ENCODE measurements at regions of chr3 and their contacts with region 1.

Region 1: DNA sequence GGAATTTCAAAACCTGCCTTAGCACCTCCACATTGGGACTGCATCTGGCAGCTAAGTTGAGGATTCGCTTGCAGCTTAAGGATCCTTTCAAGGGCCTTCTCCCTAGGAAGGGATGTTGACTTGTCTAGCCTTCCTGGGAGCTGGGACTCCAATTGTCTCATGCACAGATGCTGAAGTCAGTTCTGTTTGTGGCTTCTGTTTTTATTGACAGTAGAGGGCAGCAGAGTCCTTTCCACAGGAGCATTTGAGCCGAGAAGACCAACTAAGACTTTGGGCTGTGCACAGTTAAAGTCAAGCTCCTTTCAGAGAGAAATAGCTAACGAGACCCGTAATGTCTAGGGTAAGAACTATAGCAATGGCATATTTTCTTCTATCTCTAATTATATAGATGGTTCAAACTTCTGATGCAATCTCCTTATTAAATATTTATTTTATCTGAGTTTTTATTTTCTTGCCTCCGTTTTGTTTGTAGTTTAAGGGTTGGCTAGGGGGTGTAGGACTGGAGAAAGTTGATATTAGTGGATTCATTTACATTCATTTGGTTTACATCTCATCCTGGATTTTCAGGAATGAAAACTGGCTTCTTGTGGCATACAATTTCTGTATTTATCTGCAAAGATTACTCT is 59.7 kb upstream of the KBTBD8 start:
- DNase-seq: peak; percentile 44
- ATAC-seq: peak; percentile 91
- H3K4me3 ChIP-seq: no peak overlapping the region
- H3K27ac ChIP-seq: no peak overlapping the region
- H3K4me1 ChIP-seq: no peaks in the 10 kb centered on the region
- H3K27me3 ChIP-seq: peaks cover 37% of the 10 kb centered on the region
- CTCF ChIP-seq: peak; percentile 44 to 76 (median 69); a peak in 5 of 6 replicates
- POLR2A ChIP-seq: no peak
- RAD21 ChIP-seq: peak; percentile 71

Region 2: DNA sequence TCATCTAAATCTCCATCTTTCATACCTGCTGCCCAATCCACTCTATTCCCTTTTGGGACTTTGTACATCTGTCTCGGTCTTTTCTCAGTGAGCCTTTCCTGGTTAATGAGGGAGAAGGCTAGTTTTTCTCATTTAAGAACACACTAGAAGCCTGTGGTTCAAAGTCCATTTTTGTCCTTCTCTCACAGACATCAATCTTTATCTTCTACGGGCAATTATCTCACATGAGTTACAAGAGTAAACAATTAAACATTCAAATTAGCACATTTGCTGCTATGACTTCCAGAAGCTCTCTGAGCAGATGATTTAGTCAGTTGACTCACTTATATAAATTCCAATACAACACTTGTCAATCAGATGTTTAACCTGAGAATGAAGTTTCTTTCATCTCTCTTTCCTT is 10.4 kb after region 1 on chr3:
- CTCF ChIA-PET with region 1: no interaction called
- POLR2A ChIA-PET with region 1: no interaction called
- RAD21 ChIA-PET with region 1: no interaction called
- intact Hi-C with region 1: no loop called
- DNase-seq: no peak
- ATAC-seq: no peak
- H3K4me3 ChIP-seq: no peak overlapping the region
- H3K27ac ChIP-seq: no peak overlapping the region
- H3K4me1 ChIP-seq: no peaks in the 10 kb centered on the region
- H3K27me3 ChIP-seq: peaks cover 78% of the 10 kb centered on the region
- CTCF ChIP-seq: no peak
- POLR2A ChIP-seq: no peak
- RAD21 ChIP-seq: no peak

Region 3: GRCh38 chr3:66989860-66990665 is 51.6 kb after region 1 on chr3:
- CTCF ChIA-PET with region 1: interaction called, 13 read pairs
- POLR2A ChIA-PET with region 1: no interaction called
- RAD21 ChIA-PET with region 1: no interaction called
- intact Hi-C with region 1: no loop called
- DNase-seq: peak; percentile 29
- ATAC-seq: peak; percentile 80
- H3K4me3 ChIP-seq: no peak overlapping the region
- H3K27ac ChIP-seq: no peak overlapping the region
- H3K4me1 ChIP-seq: peaks cover 0 to 7% of the 10 kb centered on the region in 2 experiments; a peak in 2 of 4 replicates
- H3K27me3 ChIP-seq: 0 out of 2 replicates have a peak, but pooled peaks cover under 1% of the 10 kb centered on the region
- CTCF ChIP-seq: peak; percentile 14 to 59 (median 56); a peak in 5 of 6 replicates
- POLR2A ChIP-seq: no peak
- RAD21 ChIP-seq: peak; percentile 23; the same call in 1 of the 2 replicates

Region 4: GRCh38 chr3:67790043-67790442 is 851.6 kb after region 1 on chr3:
- CTCF ChIA-PET with region 1: no interaction called
- POLR2A ChIA-PET with region 1: no interaction called
- RAD21 ChIA-PET with region 1: no interaction called
- intact Hi-C with region 1: loop called (anchors 5 kb)
- DNase-seq: peak; percentile 23
- ATAC-seq: peak; percentile 94
- H3K4me3 ChIP-seq: no peak overlapping the region
- H3K27ac ChIP-seq: no peak overlapping the region
- H3K4me1 ChIP-seq: no peaks in the 10 kb centered on the region
- H3K27me3 ChIP-seq: no peaks in the 10 kb centered on the region
- CTCF ChIP-seq: peak; percentile 46 to 74 (median 69); a peak in 5 of 6 replicates
- POLR2A ChIP-seq: no peak
- RAD21 ChIP-seq: peak; percentile 65

Region 5: DNA sequence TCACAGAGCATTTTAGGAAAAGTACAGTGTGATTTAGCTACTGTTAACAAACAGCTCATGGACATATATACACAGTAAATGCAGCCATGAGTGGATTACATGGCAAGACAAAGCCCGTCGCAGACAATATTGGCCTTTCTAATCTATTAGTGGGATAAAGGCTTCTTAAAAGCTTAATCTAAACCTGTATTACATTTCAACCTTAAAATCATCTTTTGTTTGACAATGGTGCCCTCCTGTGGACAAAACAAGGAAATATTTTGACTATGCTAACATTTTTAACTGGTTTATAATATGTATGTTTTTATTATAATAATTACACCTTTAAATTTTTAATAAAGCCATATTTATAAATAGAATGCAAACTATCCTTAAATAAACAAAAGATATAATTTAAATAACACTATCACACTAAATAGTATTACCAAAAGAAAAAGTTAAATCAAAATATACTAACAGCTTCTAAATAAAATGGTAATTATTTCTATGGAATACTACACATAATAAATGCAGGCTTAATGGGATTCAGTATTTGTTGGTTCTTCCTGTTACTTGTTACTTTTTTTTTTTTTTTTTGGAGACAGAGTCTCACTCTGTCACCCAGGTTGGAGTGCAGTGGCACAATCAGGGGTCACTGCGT is 1955.3 kb after region 1 on chr3:
- CTCF ChIA-PET with region 1: interaction called, 3 read pairs
- POLR2A ChIA-PET with region 1: no interaction called
- RAD21 ChIA-PET with region 1: no interaction called
- intact Hi-C with region 1: loop called (anchors 5 kb)
- DNase-seq: no peak
- ATAC-seq: no peak
- H3K4me3 ChIP-seq: no peak overlapping the region
- H3K27ac ChIP-seq: no peak overlapping the region
- H3K4me1 ChIP-seq: no peaks in the 10 kb centered on the region
- H3K27me3 ChIP-seq: peaks cover 24% of the 10 kb centered on the region
- CTCF ChIP-seq: peak; percentile 8 to 45 (median 33); a peak in 4 of 6 replicates
- POLR2A ChIP-seq: no peak
- RAD21 ChIP-seq: peak; percentile 60

Measured in HCT116 (cell line).